ENCODE measurements at regions of chr1 and their contacts with region 1.

Region 1: DNA sequence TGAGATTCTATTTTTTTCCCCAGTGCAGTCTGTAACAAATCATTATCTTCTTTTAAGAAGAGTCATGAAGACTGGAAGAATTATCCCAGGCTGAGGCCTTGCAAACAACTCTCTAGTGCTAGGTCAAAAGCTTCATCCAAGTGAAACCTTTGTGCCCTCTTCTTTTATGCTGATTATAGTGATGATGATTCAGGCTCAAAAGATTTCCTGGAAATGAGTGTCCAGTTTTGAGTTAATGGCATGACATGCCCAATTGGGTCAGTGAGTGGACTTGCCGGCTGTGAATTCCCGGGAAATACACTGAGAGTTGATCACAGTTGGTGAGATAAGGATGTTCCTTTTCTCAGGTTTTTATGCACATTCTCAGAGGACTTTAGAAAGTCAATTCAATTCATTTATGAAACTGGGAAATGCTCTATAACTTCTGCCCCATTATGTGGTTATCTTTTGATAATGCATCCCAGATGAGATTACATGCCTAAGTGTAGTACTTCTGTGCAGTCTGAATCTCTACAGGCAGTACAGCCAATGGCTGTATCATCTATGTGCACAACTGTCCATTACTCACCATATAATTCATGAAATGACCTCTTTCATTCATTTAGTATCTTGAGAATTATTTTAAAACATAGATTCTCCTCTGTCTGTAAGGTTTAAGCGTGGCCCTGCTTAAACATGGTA is 66.2 kb downstream of the S1PR1 start:
- DNase-seq: no peak
- H3K4me3 ChIP-seq: no peak overlapping the region
- H3K27ac ChIP-seq: no peak overlapping the region
- H3K4me1 ChIP-seq: no peaks in the 10 kb centered on the region
- H3K27me3 ChIP-seq: no peaks in the 10 kb centered on the region
- CTCF ChIP-seq: no peak
- EP300 ChIP-seq: no peak
- POLR2A ChIP-seq: no peak
- RAD21 ChIP-seq: no peak

Region 2: GRCh38 chr1:101317590-101317989 is 14.6 kb after region 1 on chr1:
- CTCF ChIA-PET with region 1: interaction called, 30 read pairs
- POLR2A ChIA-PET with region 1: no interaction called
- DNase-seq: peak in 1 of 2 experiments; percentile 54
- H3K4me3 ChIP-seq: no peak overlapping the region
- H3K27ac ChIP-seq: no peak overlapping the region
- H3K4me1 ChIP-seq: no peaks in the 10 kb centered on the region
- H3K27me3 ChIP-seq: no peaks in the 10 kb centered on the region; a peak in 1 of 7 replicates
- CTCF ChIP-seq: peak in 2 of 3 experiments; percentile 26 to 40; a peak in 2 of 4 replicates
- EP300 ChIP-seq: no peak
- POLR2A ChIP-seq: no peak
- RAD21 ChIP-seq: peak; percentile 9 to 34; a peak in 3 of 4 replicates

Region 3: GRCh38 chr1:101371259-101371658 is 68.3 kb after region 1 on chr1:
- CTCF ChIA-PET with region 1: no interaction called
- POLR2A ChIA-PET with region 1: no interaction called
- DNase-seq: no peak
- H3K4me3 ChIP-seq: no peak overlapping the region
- H3K27ac ChIP-seq: no peak overlapping the region
- H3K4me1 ChIP-seq: no peaks in the 10 kb centered on the region
- H3K27me3 ChIP-seq: no peaks in the 10 kb centered on the region
- CTCF ChIP-seq: no peak
- EP300 ChIP-seq: no peak
- POLR2A ChIP-seq: no peak
- RAD21 ChIP-seq: no peak

Region 4: GRCh38 chr1:101438359-101438758 is 135.4 kb after region 1 on chr1:
- CTCF ChIA-PET with region 1: interaction called, 32 read pairs
- POLR2A ChIA-PET with region 1: no interaction called
- DNase-seq: no peak
- H3K4me3 ChIP-seq: no peak overlapping the region
- H3K27ac ChIP-seq: no peak overlapping the region
- H3K4me1 ChIP-seq: no peaks in the 10 kb centered on the region; a peak in 1 of 7 replicates
- H3K27me3 ChIP-seq: no peaks in the 10 kb centered on the region
- CTCF ChIP-seq: peak; percentile 7 to 55 (median 43)
- EP300 ChIP-seq: no peak
- POLR2A ChIP-seq: no peak
- RAD21 ChIP-seq: peak; percentile 71 to 73